A673 (cell line): ENCODE measurements at regions of chr11 and their contacts with region 1.

Region 1: DNA sequence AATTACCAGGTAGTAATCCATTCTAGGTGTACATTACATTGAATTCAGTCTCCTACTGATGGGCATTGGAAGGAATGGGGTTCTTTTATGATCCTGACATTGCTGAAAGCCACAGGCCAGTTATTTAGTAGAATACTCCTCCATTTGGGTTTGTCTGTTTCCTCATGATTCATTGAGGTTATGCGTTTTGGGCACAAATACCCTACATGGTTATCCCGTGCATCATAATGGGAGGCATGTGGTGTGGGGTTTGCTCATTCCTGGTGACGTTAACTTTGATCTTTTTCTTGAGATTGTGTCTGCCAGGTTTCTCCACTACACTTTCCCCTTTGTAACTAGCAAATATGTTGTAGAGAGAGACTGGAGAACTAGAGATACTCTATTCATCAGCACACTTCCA is 5.5 kb downstream of the FOLR3 start:
- DNase-seq: no peak
- H3K4me3 ChIP-seq: no peak overlapping the region
- H3K27ac ChIP-seq: no peak overlapping the region
- H3K4me1 ChIP-seq: no peaks in the 10 kb centered on the region
- H3K27me3 ChIP-seq: no peaks in the 10 kb centered on the region
- CTCF ChIP-seq: no peak

Region 2: GRCh38 chr11:72015511-72016171 is 125.4 kb before region 1 on chr11:
- CTCF ChIA-PET with region 1: no interaction called
- POLR2A ChIA-PET with region 1: interaction called, 10 read pairs
- intact Hi-C with region 1: no loop called
- DNase-seq: no peak
- H3K4me3 ChIP-seq: no peak overlapping the region
- H3K27ac ChIP-seq: no peak overlapping the region
- H3K4me1 ChIP-seq: no peaks in the 10 kb centered on the region
- H3K27me3 ChIP-seq: no peaks in the 10 kb centered on the region
- CTCF ChIP-seq: peak; percentile 51

Region 3: GRCh38 chr11:72024069-72024754 is 116.9 kb before region 1 on chr11:
- CTCF ChIA-PET with region 1: interaction called, 19 read pairs
- POLR2A ChIA-PET with region 1: interaction called, 10 read pairs
- intact Hi-C with region 1: loop called (anchors 1 kb)
- DNase-seq: no peak
- H3K4me3 ChIP-seq: no peak overlapping the region
- H3K27ac ChIP-seq: no peak overlapping the region
- H3K4me1 ChIP-seq: peaks cover 18% of the 10 kb centered on the region
- H3K27me3 ChIP-seq: no peaks in the 10 kb centered on the region
- CTCF ChIP-seq: no peak

Region 4: DNA sequence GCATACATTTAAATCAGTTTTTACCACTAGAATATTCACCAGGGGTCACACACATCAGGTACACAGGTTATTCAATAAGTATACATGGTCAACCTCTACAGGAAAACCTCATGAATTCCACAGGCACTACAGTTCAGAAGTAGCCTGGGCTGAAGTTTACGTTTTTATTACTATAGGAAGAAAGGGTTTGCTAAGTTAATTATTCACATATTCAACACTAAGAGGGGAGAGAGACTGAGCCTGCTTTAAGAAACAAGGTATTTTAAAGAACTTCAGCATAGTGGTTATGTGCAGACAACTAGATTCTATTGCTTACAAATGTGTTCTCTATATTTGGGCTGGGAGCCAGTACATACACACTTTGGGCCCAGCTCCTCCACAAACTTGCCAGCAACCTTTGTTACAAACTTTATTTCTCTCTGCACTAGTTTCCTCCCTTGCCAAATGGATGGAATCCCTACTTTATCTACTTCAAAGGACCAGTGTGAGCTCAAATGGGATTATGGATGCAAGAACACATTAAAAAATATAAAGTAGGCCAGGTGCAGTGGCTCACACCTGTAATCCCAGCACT is 110.5 kb before region 1 on chr11:
- CTCF ChIA-PET with region 1: interaction called, 19 read pairs
- POLR2A ChIA-PET with region 1: no interaction called
- intact Hi-C with region 1: loop called (anchors 1 kb)
- DNase-seq: no peak
- H3K4me3 ChIP-seq: no peak overlapping the region
- H3K27ac ChIP-seq: no peak overlapping the region
- H3K4me1 ChIP-seq: peaks cover 15% of the 10 kb centered on the region
- H3K27me3 ChIP-seq: no peaks in the 10 kb centered on the region
- CTCF ChIP-seq: no peak